CD4-positive, alpha-beta memory T cell (primary cell): ENCODE measurements at regions of chr19 and their contacts with region 1.

Region 1: DNA sequence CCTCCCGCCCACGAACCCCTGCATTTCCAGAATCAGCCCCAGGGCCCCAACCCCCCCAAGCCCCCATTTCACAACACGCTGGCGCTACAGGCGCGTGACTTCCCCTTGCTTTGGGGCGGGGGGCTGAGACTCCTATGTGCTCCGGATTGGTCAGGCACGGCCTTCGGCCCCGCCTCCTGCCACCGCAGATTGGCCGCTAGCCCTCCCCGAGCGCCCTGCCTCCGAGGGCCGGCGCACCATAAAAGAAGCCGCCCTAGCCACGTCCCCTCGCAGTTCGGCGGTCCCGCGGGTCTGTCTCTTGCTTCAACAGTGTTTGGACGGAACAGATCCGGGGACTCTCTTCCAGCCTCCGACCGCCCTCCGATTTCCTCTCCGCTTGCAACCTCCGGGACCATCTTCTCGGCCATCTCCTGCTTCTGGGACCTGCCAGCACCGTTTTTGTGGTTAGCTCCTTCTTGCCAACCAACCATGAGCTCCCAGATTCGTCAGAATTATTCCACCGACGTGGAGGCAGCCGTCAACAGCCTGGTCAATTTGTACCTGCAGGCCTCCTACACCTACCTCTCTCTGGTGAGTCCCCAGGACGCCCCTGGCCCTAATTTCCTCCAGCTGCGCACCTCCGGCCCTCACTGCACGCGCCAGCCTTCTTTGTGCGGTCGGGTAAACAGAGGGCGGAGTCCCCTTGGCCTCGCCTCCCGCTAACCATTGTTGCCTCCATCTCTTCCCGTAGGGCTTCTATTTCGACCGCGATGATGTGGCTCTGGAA is at the start of gene FTL:
- DNase-seq: peak; percentile 81 to 87 (median 85)
- H3K4me3 ChIP-seq: peak within 1 kb of the TSS; percentile 84 to 91
- H3K4me3 Mint-ChIP-seq: peak within 1 kb of the TSS; percentile 93 to 100 (median 96)
- H3K27ac ChIP-seq: peak within 1 kb of the TSS; percentile 64
- H3K27ac Mint-ChIP-seq: peak within 1 kb of the TSS; percentile 96 to 100 (median 97)
- H3K4me1 ChIP-seq: peaks cover 43% of the 10 kb centered on the region
- H3K4me1 Mint-ChIP-seq: peaks cover 30 to 67% (median 46%) of the 10 kb centered on the region in 4 donors
- H3K27me3 ChIP-seq: no peaks in the 10 kb centered on the region
- H3K27me3 Mint-ChIP-seq: no peaks in the 10 kb centered on the region
- total RNA-seq, gene FTL: 1,304 to 1,371 TPM

Region 2: GRCh38 chr19:48899781-48900476 is 65.3 kb before region 1 on chr19 and contains the start of gene NUCB1:
- CTCF ChIA-PET with region 1: no interaction called
- POLR2A ChIA-PET with region 1: interaction called, 29 read pairs
- intact Hi-C with region 1: loop called (anchors 2 kb)
- DNase-seq: peak; percentile 97 to 99 (median 97)
- H3K4me3 ChIP-seq: peak within 1 kb of the TSS; percentile 73 to 85
- H3K4me3 Mint-ChIP-seq: peak within 1 kb of the TSS; percentile 92 to 99 (median 98)
- H3K27ac ChIP-seq: peak within 1 kb of the TSS; percentile 81
- H3K27ac Mint-ChIP-seq: peak within 1 kb of the TSS; percentile 88 to 97 (median 95)
- H3K4me1 ChIP-seq: peaks cover 30% of the 10 kb centered on the region
- H3K4me1 Mint-ChIP-seq: peaks cover 18 to 49% (median 29%) of the 10 kb centered on the region in 4 donors
- H3K27me3 ChIP-seq: peaks cover 4% of the 10 kb centered on the region
- H3K27me3 Mint-ChIP-seq: peaks cover under 1 to 2% of the 10 kb centered on the region in 2 donors
- total RNA-seq, gene NUCB1: 132 to 145 TPM

Region 3: DNA sequence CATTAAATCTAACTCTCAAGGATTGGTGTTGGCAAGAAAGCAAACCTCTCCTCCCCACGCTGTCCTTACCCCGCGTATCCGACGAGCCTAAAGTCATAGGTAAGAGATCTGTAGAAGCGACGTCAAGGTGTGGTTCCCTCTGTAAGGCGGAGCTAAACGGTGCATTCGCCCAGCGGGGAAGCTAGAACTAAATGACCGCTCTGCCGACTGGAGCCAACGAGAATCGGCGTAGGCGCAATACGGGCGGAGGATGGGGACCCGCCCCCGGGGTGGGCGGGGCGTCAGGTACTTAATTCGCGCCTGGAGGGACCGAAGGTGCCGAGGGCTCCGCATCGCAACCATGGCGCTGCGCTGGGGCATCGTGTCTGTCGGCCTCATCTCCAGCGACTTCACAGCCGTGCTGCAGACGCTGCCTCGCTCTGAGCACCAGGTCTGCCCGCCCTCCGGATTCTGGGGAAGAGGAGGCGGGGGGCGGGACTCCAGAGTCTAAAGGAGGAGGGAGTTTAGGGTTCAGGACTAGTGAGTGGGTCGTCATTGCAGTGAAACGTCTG is 31.8 kb before region 1 on chr19 and contains the start of gene DHDH:
- CTCF ChIA-PET with region 1: interaction called, 5 read pairs
- POLR2A ChIA-PET with region 1: interaction called, 22 read pairs
- intact Hi-C with region 1: loop called (anchors 2 kb)
- DNase-seq: peak; percentile 86 to 92 (median 87)
- H3K4me3 ChIP-seq: peak within 1 kb of the TSS; percentile 39 to 54
- H3K4me3 Mint-ChIP-seq: peak within 1 kb of the TSS; percentile 77 to 92 (median 88)
- H3K27ac ChIP-seq: peak within 1 kb of the TSS; percentile 23
- H3K27ac Mint-ChIP-seq: peak within 1 kb of the TSS in 6 of 7 donors; percentile 49 to 93 (median 90)
- H3K4me1 ChIP-seq: peaks cover 6% of the 10 kb centered on the region
- H3K4me1 Mint-ChIP-seq: peaks cover 5 to 17% (median 11%) of the 10 kb centered on the region in 4 donors
- H3K27me3 ChIP-seq: no peaks in the 10 kb centered on the region
- H3K27me3 Mint-ChIP-seq: no peaks in the 10 kb centered on the region
- total RNA-seq, gene DHDH: 1.2 to 1.6 TPM

Region 4: DNA sequence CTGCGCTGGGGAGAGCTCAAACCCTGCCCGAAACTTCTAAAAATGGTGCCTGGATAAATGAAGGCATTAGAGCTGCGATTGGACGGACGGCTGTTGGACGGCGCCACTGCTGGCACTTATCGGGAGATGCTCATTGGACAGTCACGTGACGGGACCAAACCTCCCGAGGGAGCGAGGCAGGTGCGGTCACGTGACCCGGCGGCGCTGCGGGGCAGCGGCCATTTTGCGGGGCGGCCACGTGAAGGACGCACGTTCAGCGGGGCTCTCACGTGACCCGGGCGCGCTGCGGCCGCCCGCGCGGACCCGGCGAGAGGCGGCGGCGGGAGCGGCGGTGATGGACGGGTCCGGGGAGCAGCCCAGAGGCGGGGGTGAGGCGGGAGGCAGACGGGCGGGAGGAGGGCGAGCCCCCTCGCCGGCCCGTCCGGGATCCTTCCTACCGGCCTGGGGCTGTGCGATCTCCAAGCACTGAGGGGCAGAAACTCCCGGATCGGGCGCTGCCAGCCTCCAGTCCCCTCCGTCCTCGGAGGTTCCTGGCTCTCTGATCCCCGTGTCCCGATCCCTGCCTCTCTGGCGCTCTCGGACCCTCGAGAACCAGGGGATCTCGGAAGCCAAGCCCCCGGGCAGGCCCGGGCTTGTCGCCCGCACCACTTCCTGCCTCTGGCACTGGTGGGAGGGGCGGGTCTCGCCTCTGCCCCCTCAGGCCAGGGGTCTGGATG is 10.5 kb before region 1 on chr19 and contains the start of gene BAX:
- CTCF ChIA-PET with region 1: interaction called, 15 read pairs
- POLR2A ChIA-PET with region 1: interaction called, 99 read pairs
- intact Hi-C with region 1: loop called (anchors 1 kb)
- DNase-seq: peak; percentile 69 to 81 (median 74)
- H3K4me3 ChIP-seq: peak within 1 kb of the TSS; percentile 76 to 87
- H3K4me3 Mint-ChIP-seq: peak within 1 kb of the TSS; percentile 79 to 94 (median 90)
- H3K27ac ChIP-seq: peak within 1 kb of the TSS; percentile 86
- H3K27ac Mint-ChIP-seq: peak within 1 kb of the TSS; percentile 77 to 92 (median 86)
- H3K4me1 ChIP-seq: peaks cover 23% of the 10 kb centered on the region
- H3K4me1 Mint-ChIP-seq: peaks cover 12 to 34% (median 27%) of the 10 kb centered on the region in 4 donors
- H3K27me3 ChIP-seq: no peaks in the 10 kb centered on the region
- H3K27me3 Mint-ChIP-seq: no peaks in the 10 kb centered on the region
- total RNA-seq, gene BAX: 173 to 183 TPM

Region 5: DNA sequence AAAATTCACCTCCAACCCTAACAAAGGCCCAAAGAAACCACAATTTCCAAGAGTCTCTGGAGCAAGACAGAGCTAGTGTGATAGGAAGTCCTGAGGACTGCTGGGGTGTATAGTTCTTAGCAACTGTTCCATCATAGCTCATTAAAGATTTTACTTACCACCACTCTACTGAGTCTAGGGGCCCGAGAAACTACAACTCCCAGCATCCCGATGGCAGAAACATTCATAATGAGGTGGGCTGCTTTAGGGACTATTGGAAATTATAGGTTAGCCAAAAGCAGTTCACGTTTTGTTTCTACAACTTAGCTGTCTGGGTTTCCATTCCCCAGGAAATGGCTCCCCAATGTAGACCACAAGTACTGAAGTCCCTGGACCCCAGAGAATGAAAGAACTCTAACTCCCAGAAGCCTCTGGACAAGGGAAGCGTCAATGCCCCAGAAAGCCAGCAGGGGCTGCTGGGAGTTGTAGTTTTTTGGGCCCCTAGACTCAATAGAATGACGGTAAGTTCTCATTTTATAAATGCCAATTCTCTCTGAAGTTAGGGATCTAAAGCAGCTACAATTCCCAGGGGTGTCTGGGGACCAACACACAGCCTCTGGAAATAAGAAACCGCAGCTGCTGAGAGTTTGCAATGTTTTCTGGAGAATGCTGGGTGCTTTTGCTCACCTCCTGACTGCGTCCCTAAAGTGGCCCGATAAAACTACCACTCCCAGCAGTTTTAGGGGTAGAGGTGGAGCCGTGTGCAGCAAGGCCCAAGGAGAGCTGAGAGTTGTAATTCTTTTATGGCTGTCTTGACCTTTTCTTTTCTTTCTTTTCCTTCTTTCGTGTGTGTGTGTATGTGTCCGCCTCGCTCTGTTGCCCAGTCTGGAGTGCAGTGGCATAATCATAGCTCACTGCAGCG is 11.0 kb after region 1 on chr19:
- CTCF ChIA-PET with region 1: interaction called, 14 read pairs
- POLR2A ChIA-PET with region 1: interaction called, 47 read pairs
- intact Hi-C with region 1: no loop called
- DNase-seq: peak in 4 of 5 donors; percentile 42 to 54 (median 46)
- H3K4me3 ChIP-seq: no peak overlapping the region
- H3K4me3 Mint-ChIP-seq: no peak overlapping the region
- H3K27ac ChIP-seq: no peak overlapping the region
- H3K27ac Mint-ChIP-seq: peak overlapping the region in 3 of 7 donors; percentile 35 to 44 (median 41)
- H3K4me1 ChIP-seq: no peaks in the 10 kb centered on the region
- H3K4me1 Mint-ChIP-seq: peaks cover under 1 to 6% (median 2%) of the 10 kb centered on the region in 4 donors
- H3K27me3 ChIP-seq: no peaks in the 10 kb centered on the region
- H3K27me3 Mint-ChIP-seq: no peaks in the 10 kb centered on the region

Region 6: DNA sequence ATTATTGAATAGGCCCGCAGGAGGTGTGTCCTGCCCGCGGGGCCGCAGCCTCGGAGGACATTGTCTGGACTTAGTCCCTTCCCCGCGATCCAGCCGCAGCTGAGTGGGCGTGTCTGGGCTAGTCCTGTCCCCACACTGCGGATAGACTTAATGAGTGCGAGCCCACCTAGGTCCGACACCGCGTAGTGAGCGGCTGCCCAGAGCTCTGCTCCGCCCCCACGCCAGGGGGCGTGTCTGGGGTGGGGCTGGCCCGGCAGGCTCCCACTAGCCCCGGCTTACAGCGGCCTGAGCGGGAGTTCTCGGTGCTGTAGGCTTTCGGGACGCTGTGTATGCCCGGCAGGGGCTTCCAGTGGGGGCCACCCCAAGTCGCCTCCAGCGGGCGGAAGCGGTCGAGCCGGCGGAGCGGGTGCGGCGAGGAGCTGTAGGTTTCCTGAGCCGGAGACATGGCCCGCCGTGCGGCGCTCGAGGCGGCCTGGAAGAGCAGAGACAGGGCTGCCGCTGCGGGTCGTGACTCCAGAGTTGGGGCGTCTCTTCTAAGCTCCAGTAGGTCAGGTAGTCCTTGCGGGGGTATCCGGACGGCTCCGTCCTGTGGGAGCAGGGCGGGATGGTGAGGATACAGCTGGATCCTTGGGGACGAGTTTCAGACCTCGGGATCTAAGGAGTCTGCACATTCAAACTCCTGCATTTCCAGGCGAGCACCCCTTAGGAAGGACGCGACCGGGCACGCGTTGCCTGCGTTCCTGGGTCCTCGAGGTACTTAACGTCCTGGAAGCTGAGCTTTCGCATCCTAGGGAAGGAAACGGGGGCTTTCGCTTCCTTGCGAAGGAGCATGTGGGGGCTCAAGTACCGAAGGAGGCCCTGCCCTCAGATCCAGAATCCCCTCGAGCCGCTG is 91.0 kb after region 1 on chr19:
- CTCF ChIA-PET with region 1: no interaction called
- POLR2A ChIA-PET with region 1: no interaction called
- intact Hi-C with region 1: no loop called
- DNase-seq: peak; percentile 42 to 52 (median 48)
- H3K4me3 ChIP-seq: peak overlapping the region; percentile 49 to 57
- H3K4me3 Mint-ChIP-seq: peak overlapping the region; percentile 79 to 93 (median 89)
- H3K27ac ChIP-seq: no peak overlapping the region
- H3K27ac Mint-ChIP-seq: peak overlapping the region in 2 of 7 donors; percentile 2 to 17
- H3K4me1 ChIP-seq: peaks cover 23% of the 10 kb centered on the region
- H3K4me1 Mint-ChIP-seq: peaks cover 7 to 27% (median 14%) of the 10 kb centered on the region in 4 donors
- H3K27me3 ChIP-seq: peaks cover 18% of the 10 kb centered on the region
- H3K27me3 Mint-ChIP-seq: peaks cover 16 to 24% of the 10 kb centered on the region in 2 donors